ENCODE measurements at regions of chr9 and their contacts with region 1.

Region 1: GRCh38 chr9:21110708-21111576 is 30.7 kb downstream of the IFNW1 start:
- DNase-seq: peak in 7 of 35 experiments; percentile 9 to 86 (median 25)
- ATAC-seq: peak; percentile 67 to 88 (median 78)
- H3K4me3 ChIP-seq: no peak overlapping the region
- H3K4me3 Mint-ChIP-seq: no peak overlapping the region
- H3K27ac ChIP-seq: no peak overlapping the region
- H3K27ac Mint-ChIP-seq: no peak overlapping the region
- H3K4me1 ChIP-seq: no peaks in the 10 kb centered on the region
- H3K4me1 Mint-ChIP-seq: no peaks in the 10 kb centered on the region
- H3K27me3 ChIP-seq: no peaks in the 10 kb centered on the region
- H3K27me3 Mint-ChIP-seq: peaks cover 0 to 1% of the 10 kb centered on the region in 2 donors

Region 2: GRCh38 chr9:19464764-19465585 is 1646.0 kb before region 1 on chr9:
- CTCF ChIA-PET with region 1: interaction called, 6 to 11 read pairs
- POLR2A ChIA-PET with region 1: no interaction called
- DNase-seq: peak; percentile 37 to 80 (median 66)
- ATAC-seq: peak; percentile 93
- H3K4me3 ChIP-seq: peak overlapping the region; percentile 26 to 35
- H3K4me3 Mint-ChIP-seq: peak overlapping the region; percentile 77 to 87 (median 79)
- H3K27ac ChIP-seq: no peak overlapping the region
- H3K27ac Mint-ChIP-seq: no peak overlapping the region
- H3K4me1 ChIP-seq: peaks cover 0 to 11% of the 10 kb centered on the region in 2 experiments
- H3K4me1 Mint-ChIP-seq: peaks cover 5 to 15% (median 11%) of the 10 kb centered on the region in 3 donors
- H3K27me3 ChIP-seq: peaks cover 0 to 4% of the 10 kb centered on the region in 2 experiments
- H3K27me3 Mint-ChIP-seq: no peaks in the 10 kb centered on the region

Region 3: DNA sequence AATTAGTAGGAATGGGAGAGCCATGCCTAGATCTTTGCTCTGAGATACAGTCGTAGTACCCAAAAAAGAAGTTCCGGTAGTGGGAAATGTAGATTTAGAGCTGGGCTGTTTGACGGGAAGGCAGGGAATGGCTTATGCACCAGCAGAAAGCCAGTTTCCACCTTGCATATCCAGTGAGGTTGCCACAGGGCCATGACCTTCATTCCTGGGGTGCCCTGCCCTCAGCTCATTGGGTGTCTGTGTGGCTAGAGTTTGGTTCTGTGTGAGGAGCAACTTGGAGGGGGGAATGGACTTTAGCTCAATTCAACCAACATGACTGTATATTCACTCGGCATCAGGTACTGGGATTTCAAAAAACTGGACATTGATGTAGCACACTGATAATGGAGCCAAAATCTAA is 788.7 kb before region 1 on chr9:
- CTCF ChIA-PET with region 1: no interaction called
- POLR2A ChIA-PET with region 1: interaction called in 1 of 2 experiments, 10 read pairs
- DNase-seq: no peak
- ATAC-seq: no peak
- H3K4me3 ChIP-seq: no peak overlapping the region
- H3K4me3 Mint-ChIP-seq: peak overlapping the region; percentile 38 to 72 (median 59)
- H3K27ac ChIP-seq: peak overlapping the region; percentile 56
- H3K27ac Mint-ChIP-seq: peak overlapping the region; percentile 95
- H3K4me1 ChIP-seq: peaks cover 30 to 65% of the 10 kb centered on the region in 2 experiments
- H3K4me1 Mint-ChIP-seq: peaks cover 81 to 90% (median 81%) of the 10 kb centered on the region in 3 donors
- H3K27me3 ChIP-seq: no peaks in the 10 kb centered on the region
- H3K27me3 Mint-ChIP-seq: no peaks in the 10 kb centered on the region

Region 4: GRCh38 chr9:20670395-20670794 is 440.5 kb before region 1 on chr9:
- CTCF ChIA-PET with region 1: no interaction called
- POLR2A ChIA-PET with region 1: no interaction called
- DNase-seq: no peak
- ATAC-seq: no peak
- H3K4me3 ChIP-seq: no peak overlapping the region
- H3K4me3 Mint-ChIP-seq: no peak overlapping the region
- H3K27ac ChIP-seq: no peak overlapping the region
- H3K27ac Mint-ChIP-seq: no peak overlapping the region
- H3K4me1 ChIP-seq: no peaks in the 10 kb centered on the region
- H3K4me1 Mint-ChIP-seq: no peaks in the 10 kb centered on the region
- H3K27me3 ChIP-seq: no peaks in the 10 kb centered on the region
- H3K27me3 Mint-ChIP-seq: no peaks in the 10 kb centered on the region

Region 5: GRCh38 chr9:20941174-20941690 is 169.7 kb before region 1 on chr9:
- CTCF ChIA-PET with region 1: interaction called, 5 to 19 read pairs
- POLR2A ChIA-PET with region 1: no interaction called
- DNase-seq: peak in 34 of 35 experiments; percentile 4 to 83 (median 30)
- ATAC-seq: peak; percentile 85 to 95 (median 89)
- H3K4me3 ChIP-seq: no peak overlapping the region
- H3K4me3 Mint-ChIP-seq: no peak overlapping the region
- H3K27ac ChIP-seq: no peak overlapping the region
- H3K27ac Mint-ChIP-seq: no peak overlapping the region
- H3K4me1 ChIP-seq: no peaks in the 10 kb centered on the region
- H3K4me1 Mint-ChIP-seq: peaks cover 4 to 5% (median 4%) of the 10 kb centered on the region in 3 donors
- H3K27me3 ChIP-seq: no peaks in the 10 kb centered on the region
- H3K27me3 Mint-ChIP-seq: no peaks in the 10 kb centered on the region

Region 6: DNA sequence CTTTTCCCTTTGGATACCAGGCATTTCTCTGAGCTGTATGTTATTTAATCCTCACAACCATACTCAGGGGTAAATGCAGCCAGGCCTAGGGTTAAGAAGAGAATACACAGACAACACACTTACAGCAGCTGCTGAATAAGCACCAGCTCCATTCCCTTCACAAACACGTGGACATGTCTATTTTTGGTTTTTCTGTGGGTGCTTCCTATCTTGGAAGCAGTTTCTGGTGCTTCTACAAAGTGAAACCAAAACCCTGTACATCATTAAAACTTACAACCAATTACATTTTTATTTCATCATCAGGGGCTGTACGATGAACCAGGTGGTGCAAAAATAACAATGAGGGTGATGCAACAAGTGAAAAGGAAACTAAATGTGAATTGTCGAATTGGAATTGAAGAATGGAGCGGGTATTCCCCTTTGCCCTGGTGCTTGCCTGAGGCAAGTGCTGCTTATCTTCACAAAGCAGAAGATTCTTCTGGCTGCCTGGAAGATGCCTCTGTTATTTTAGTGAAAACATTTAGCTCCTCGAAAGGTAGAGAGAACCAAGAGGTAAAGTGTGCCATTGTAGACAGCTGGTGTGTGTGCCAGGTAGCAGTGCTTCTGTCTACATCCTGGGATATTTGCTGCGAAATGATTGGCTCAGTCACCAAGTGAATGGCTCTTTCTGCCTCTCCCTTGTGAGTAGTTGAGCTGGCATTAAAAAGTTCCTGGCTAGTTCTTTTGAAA is 14.6 kb before region 1 on chr9:
- CTCF ChIA-PET with region 1: interaction called, 4 to 16 read pairs
- POLR2A ChIA-PET with region 1: no interaction called
- DNase-seq: peak in 31 of 35 experiments; percentile 2 to 81 (median 37)
- ATAC-seq: peak; percentile 73 to 96 (median 84)
- H3K4me3 ChIP-seq: peak overlapping the region in 1 of 2 donors; percentile 25
- H3K4me3 Mint-ChIP-seq: peak overlapping the region; percentile 59 to 73 (median 67)
- H3K27ac ChIP-seq: peak overlapping the region; percentile 70
- H3K27ac Mint-ChIP-seq: peak overlapping the region; percentile 86 to 88
- H3K4me1 ChIP-seq: peaks cover 4 to 17% of the 10 kb centered on the region in 2 experiments
- H3K4me1 Mint-ChIP-seq: peaks cover 33 to 54% (median 43%) of the 10 kb centered on the region in 3 donors
- H3K27me3 ChIP-seq: no peaks in the 10 kb centered on the region
- H3K27me3 Mint-ChIP-seq: no peaks in the 10 kb centered on the region